Breast epithelium (tissue), 4 donors: ENCODE measurements at regions of chr3 and their contacts with region 1.

Region 1: DNA sequence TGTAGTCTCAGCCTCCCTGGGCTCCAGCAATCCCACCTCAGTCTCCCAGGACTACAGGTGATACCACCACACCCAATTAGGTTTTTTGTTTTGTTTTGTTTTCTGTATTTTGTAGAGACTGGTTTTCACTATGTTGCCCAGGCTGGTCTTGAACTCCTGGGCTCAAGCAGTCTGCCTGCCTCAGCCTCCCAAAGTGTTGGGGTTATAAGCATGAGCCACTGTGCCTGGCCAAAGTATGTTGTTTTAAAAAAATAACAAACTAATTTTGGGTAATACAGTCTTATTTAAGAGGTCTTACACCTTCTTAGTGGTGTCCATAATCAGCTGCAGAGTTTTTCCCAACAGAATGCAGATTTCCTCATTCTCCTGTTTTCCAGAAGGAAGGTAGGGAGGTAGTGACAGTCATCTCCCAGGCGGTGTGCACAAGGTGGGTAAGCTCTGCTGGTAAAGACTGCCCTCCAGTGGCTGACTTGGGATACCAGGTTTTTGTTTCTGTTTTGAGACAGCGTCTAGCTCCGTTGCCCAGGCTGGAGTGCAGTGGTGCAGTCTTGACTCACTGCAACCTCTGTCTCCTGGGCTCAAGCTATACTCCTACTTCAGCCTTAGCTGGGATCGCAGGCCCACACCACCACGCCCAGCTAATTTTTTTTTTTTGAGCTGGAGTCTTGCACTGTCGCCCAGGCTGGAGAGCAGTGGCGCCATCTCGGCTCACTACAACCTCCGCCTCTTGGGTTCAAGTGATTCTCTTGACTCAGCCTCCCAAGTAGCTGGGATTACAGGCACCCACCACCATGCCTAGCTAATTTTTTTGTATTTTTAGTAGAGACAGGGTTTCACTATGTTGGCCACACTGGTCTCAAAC is 58.4 kb downstream of the MAP6D1 start:
- DNase-seq: peak; percentile 57 to 71
- H3K4me3 ChIP-seq: no peak overlapping the region
- H3K27ac ChIP-seq: peak overlapping the region; percentile 7 to 50
- H3K4me1 ChIP-seq: no peaks in the 10 kb centered on the region
- H3K27me3 ChIP-seq: no peaks in the 10 kb centered on the region
- CTCF ChIP-seq: peak; percentile 63 to 76 (median 72)
- POLR2A ChIP-seq: no peak

Region 2: DNA sequence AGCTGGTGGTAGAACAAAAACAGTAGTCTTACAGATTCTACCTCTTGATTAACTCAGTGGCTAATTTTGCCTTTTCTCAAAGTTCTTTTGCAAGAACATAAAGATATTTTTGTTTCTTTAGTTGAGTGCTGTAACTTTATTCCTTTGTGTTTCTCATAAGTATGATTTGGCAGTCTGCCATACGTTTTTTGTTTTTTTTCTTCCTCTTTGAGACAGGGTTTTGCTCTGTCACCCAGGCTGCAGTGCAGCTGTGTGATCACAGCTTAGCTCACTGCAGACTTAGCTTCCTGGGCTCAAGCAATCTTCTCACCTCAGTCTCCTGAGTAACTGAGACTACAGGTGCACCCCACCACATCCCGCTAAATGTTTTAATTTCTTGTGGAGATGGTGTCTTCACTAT is 491.6 kb before region 1 on chr3:
- intact Hi-C with region 1: no loop called
- DNase-seq: no peak
- H3K4me3 ChIP-seq: no peak overlapping the region
- H3K27ac ChIP-seq: peak overlapping the region in 1 of 2 donors; percentile 48
- H3K4me1 ChIP-seq: no peaks in the 10 kb centered on the region
- H3K27me3 ChIP-seq: no peaks in the 10 kb centered on the region
- CTCF ChIP-seq: no peak
- POLR2A ChIP-seq: no peak

Region 3: DNA sequence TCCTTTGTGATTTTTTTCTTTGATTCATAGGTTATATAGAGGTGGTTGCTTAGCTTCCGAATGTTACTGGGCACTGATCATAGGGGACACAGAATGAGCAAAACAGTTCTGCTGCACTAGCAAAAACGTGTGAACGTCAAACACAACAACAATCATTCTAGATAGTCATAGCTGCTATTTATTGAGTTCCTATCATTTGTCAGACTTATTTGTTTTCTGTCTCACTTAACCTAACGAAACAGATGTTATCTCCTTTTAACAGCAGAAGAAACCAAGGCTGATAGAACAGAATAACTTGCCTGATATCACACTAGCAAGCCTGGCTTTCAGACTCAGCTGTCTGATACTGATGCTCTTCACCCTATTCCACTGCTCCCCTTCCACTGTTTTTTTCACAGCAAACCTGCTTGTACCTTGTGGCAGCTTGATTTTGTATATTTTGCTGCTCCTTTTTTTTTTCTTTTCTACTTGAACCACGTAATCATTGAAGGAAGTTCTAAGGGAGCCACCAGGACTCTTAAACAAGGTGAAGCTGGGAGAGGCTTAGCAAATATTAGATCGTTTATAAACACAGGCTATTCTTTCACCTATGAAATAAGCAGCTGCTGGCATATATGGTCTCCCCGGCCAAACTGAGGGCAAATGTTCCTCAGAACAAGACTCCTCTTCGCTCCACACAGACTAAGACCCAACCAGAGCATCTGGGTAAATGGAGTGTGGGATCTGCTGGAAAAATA is 417.4 kb before region 1 on chr3:
- intact Hi-C with region 1: no loop called
- DNase-seq: no peak
- H3K4me3 ChIP-seq: no peak overlapping the region
- H3K27ac ChIP-seq: no peak overlapping the region
- H3K4me1 ChIP-seq: no peaks in the 10 kb centered on the region
- H3K27me3 ChIP-seq: no peaks in the 10 kb centered on the region
- CTCF ChIP-seq: no peak
- POLR2A ChIP-seq: no peak

Region 4: DNA sequence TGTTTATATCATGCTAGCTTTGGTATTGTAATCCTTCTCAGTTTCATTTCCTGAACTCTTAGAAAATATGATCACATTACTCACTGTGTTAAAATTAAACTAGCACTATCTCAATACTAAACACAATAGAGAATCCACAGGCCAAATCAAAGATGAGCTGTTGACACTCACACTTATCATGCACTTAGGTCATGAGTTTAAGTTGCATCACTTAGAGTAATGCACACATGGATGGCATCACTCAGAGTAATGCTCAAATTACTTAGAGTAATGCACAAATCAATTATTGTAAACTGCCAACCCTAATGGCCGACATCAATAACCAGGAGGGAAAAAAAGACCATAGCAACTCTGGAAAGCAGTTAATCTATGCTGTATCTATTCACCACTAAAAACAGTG is 298.6 kb before region 1 on chr3:
- intact Hi-C with region 1: loop called (anchors 5 kb)
- DNase-seq: no peak
- H3K4me3 ChIP-seq: no peak overlapping the region
- H3K27ac ChIP-seq: no peak overlapping the region
- H3K4me1 ChIP-seq: no peaks in the 10 kb centered on the region
- H3K27me3 ChIP-seq: no peaks in the 10 kb centered on the region
- CTCF ChIP-seq: no peak
- POLR2A ChIP-seq: no peak

Region 5: DNA sequence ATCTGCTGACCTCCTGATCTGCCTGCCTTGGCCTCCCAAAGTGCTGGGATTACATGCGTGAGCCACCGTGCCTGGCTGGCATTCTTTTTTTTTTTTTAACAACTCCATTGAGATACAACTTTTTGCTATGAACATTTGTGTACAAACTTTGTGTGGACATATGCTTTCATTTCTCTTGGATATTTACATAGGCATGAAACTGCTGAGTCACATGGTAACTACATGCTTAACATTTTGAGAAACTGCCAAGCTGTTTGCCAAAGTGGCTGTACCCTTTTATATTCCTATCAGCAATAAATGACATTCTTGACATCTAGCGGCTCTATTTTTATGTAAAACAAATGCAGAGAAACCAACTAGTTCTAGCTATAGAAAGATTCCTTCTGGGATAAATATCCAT is 78.1 kb before region 1 on chr3:
- intact Hi-C with region 1: no loop called
- DNase-seq: no peak
- H3K4me3 ChIP-seq: no peak overlapping the region
- H3K27ac ChIP-seq: no peak overlapping the region
- H3K4me1 ChIP-seq: no peaks in the 10 kb centered on the region
- H3K27me3 ChIP-seq: no peaks in the 10 kb centered on the region
- CTCF ChIP-seq: no peak
- POLR2A ChIP-seq: no peak